Mammary epithelial cell (primary cell): ENCODE measurements at regions of chr16 and their contacts with region 1.

Region 1: DNA sequence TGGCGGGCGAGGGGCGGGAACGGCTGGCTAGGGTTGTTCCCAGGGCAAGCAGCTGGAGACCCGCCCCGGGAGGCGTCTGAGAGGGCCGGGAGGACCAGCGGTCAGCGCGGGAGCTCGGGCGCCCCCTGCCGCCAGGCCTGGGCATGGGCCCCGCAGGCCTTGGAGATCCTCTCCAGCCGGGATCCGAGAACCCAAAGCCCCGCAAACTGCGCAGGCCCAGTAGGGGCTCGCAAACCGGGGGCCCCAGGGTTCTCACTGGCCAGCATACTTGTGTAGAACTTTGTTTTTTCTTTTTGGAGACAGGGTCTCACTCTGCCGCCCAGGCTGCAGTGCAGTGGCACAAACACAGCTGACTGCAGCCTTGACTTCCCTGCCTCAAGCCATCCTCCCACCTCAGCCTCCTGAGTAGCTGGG is 20.8 kb upstream of the ZNF423 start:
- DNase-seq: no peak
- H3K4me3 ChIP-seq: no peak overlapping the region
- H3K27ac ChIP-seq: no peak overlapping the region
- H3K4me1 ChIP-seq: no peaks in the 10 kb centered on the region
- H3K27me3 ChIP-seq: peaks cover 2% of the 10 kb centered on the region
- CTCF ChIP-seq: peak; percentile 39 to 81

Region 2: DNA sequence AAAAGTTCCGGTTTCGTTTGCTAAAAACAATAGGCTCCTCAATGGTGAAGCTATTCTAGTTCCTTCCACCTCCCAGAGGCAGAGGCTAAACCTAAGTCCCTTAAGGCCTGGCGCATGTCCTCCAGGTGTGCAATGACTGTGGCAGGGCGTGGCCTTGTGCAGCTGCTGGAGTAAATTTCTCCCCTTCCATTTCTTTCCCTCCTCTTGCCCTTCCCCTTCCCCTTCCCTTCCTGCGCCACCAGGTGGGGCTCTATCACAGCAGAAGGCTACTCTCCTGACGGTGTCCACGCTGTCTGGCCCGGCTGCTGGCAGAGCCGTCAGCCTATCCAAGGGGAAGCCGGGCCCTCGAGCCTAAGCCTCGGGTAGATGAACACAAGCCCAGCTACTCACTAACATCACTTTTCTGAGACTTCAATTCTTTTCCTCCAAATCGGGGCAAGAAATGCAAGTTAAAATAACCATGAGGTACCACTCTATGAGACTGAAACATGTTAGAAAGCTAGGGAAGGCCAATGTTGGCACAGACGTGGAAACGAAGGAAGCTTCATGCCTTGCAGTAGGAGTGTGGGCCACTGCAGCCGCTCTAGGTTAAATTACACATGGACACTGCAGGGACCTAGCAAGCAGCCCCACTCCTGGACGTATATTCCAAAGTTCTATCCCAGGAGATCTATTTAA is 468.7 kb before region 1 on chr16:
- CTCF ChIA-PET with region 1: no interaction called
- dilution Hi-C with region 1: no loop called
- in situ Hi-C with region 1: no loop called
- intact Hi-C with region 1: loop called (anchors 5 kb)
- DNase-seq: peak; percentile 67
- H3K4me3 ChIP-seq: no peak overlapping the region
- H3K27ac ChIP-seq: no peak overlapping the region
- H3K4me1 ChIP-seq: no peaks in the 10 kb centered on the region
- H3K27me3 ChIP-seq: no peaks in the 10 kb centered on the region
- CTCF ChIP-seq: peak; percentile 63 to 90

Region 3: GRCh38 chr16:49932946-49933345 is 56.2 kb after region 1 on chr16:
- CTCF ChIA-PET with region 1: no interaction called
- dilution Hi-C with region 1: no loop called
- in situ Hi-C with region 1: no loop called
- intact Hi-C with region 1: no loop called
- DNase-seq: peak; percentile 8
- H3K4me3 ChIP-seq: no peak overlapping the region
- H3K27ac ChIP-seq: no peak overlapping the region
- H3K4me1 ChIP-seq: no peaks in the 10 kb centered on the region
- H3K27me3 ChIP-seq: no peaks in the 10 kb centered on the region
- CTCF ChIP-seq: no peak